Sigmoid colon (tissue), 7 donors: ENCODE measurements at regions of chr15 and their contacts with region 1.

Region 1: DNA sequence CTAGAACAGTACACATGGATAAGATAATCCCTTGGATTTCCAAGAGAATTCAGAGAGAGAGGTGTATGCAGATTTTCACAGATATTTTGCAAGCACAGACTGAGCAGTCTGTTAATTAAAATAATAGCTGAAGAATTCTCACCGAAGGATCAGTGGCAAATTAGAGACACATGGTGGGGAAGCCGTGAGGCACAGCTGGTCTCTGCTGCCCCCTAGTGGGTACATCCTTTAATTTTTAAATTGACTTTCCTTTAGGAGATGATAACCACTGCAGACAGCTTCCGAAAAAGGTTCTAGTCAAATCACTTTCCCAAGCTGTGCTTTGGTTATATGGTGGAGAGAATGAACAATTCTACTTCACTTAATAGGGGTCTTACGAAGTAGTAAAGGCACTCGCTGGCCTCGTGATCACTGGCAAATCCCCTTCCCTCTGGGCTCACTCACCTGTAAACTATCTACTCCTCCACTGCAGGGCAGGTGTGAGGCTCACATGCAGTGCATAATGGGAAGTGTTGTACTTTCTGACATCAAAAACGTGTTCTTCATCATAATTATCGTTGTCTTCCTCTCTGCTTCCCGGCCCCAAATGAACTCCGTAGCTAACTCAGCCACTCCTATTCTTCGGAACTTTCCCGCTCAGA is 19.5 kb downstream of the MESD start:
- DNase-seq: no peak
- H3K4me3 ChIP-seq: no peak overlapping the region
- H3K27ac ChIP-seq: no peak overlapping the region
- H3K4me1 ChIP-seq: peaks cover 0 to 24% (median 16%) of the 10 kb centered on the region in 4 donors
- H3K27me3 ChIP-seq: no peaks in the 10 kb centered on the region
- CTCF ChIP-seq: peak; percentile 53 to 88 (median 76)
- EP300 ChIP-seq: no peak
- POLR2A ChIP-seq: no peak

Region 2: GRCh38 chr15:80455668-80456442 is 514.3 kb before region 1 on chr15:
- intact Hi-C with region 1: loop called (anchors 2 kb)
- DNase-seq: peak; percentile 74
- H3K4me3 ChIP-seq: no peak overlapping the region
- H3K27ac ChIP-seq: no peak overlapping the region
- H3K4me1 ChIP-seq: peaks cover 0 to 18% (median 9%) of the 10 kb centered on the region in 4 donors
- H3K27me3 ChIP-seq: no peaks in the 10 kb centered on the region
- CTCF ChIP-seq: peak; percentile 68 to 89 (median 88)
- EP300 ChIP-seq: no peak
- POLR2A ChIP-seq: no peak

Region 3: DNA sequence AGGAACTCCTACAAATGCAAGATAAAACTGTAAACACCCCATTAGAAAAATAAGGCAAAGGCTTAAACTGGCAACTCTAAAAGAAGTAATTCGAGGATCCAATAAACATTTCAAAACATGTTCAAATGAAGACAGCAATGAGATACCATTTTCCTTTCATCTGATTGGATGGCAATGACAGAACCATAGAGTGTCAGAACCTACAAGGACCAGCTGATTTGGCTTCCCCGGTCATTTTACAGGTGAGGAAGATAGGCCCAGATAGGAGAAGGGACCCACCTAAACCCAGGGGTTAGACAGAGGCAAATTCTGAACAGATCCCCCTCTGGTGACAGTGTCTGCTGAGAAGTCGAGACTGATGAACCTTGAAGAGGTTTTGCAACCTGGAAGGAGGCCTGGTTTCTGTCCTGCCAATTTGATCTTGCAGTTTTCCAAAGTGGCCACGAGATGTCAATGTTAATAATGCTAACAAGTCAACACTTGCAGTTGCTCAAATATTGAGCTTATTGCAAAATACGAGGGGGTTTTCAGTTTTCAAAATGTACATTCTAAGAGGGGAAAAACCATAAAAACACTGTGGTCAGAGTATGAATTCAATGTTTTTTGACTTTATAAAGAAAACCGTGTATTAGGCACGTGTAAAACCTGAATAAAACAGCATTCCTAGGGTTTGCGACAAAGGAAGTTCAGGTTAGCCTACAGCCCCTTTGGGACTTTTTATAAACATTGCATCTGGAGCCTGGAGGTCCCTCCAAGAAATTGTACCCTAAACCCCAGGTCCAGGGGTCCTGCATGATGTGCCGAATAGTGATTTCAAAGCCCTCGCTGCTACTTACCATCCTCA is 185.5 kb after region 1 on chr15:
- intact Hi-C with region 1: no loop called
- DNase-seq: peak; percentile 78
- H3K4me3 ChIP-seq: no peak overlapping the region
- H3K27ac ChIP-seq: peak overlapping the region in 1 of 4 donors; percentile 1
- H3K4me1 ChIP-seq: peaks cover 0 to 17% (median 12%) of the 10 kb centered on the region in 4 donors
- H3K27me3 ChIP-seq: no peaks in the 10 kb centered on the region
- CTCF ChIP-seq: peak; percentile 16 to 45 (median 36)
- EP300 ChIP-seq: no peak
- POLR2A ChIP-seq: no peak